ENCODE measurements at regions of chr11 and their contacts with region 1.

Region 1: GRCh38 chr11:63916837-63917691 is at the start of gene RCOR2:
- H3K4me3 ChIP-seq: peak within 1 kb of the TSS; percentile 47
- H3K27ac ChIP-seq: peak within 1 kb of the TSS; percentile 49; the same call in 1 of the 2 replicates
- H3K4me1 ChIP-seq: peaks cover 4% of the 10 kb centered on the region
- CTCF ChIP-seq: no peak

Region 2: GRCh38 chr11:63905179-63905578 is 11.9 kb before region 1 on chr11:
- CTCF ChIA-PET with region 1: no interaction called
- POLR2A ChIA-PET with region 1: no interaction called
- H3K4me3 ChIP-seq: no peak overlapping the region
- H3K27ac ChIP-seq: no peak overlapping the region
- H3K4me1 ChIP-seq: no peaks in the 10 kb centered on the region
- CTCF ChIP-seq: no peak

Region 3: DNA sequence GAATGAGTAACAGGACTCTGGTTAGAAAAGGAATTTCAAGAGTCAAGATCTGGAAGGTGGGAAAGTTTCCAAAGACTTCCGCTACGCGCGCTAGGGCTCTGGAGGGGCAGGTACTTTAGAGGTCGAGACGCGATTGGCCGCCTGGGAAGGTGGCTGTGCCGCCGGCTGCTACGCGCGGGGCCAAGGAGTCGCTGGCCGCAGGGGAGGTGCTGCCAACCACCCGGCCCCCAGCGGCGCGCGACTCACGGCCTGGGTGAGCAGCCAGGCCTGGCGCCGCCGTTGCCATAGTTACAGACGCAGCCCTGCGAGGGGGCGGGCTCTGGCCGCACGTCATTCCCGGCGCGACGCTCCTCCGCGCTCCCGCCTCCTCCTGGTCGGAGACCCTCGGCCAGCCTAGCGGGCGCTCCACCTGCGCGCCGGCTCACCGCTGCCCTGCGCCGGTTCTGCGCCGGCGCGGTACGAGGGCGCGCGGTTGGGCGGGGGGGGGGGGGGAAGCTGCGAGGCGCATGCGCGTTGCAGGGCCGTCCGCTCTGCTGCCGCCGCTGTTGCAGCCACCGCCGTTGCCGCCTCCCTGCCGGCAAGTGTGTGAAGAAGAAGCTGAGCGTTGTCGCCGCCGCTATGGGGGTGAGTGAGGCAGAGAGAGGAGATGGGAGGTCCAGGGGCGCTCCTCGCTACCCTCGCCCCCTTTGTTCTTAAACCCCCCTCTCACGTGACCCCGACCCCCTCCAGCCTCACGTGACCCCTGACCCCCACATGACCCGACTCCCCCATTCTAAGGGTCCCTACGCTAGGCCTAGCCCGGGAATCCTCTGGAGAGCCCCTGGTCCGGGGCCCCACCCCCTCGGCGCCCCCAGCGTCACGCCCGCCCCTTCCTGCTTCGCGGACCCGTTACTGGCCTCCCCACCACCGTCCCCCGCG is 21.7 kb after region 1 on chr11 and contains the start of gene NAA40:
- CTCF ChIA-PET with region 1: interaction called, 11 read pairs
- POLR2A ChIA-PET with region 1: interaction called, 9 read pairs
- H3K4me3 ChIP-seq: peak within 1 kb of the TSS; percentile 90
- H3K27ac ChIP-seq: peak within 1 kb of the TSS; percentile 57; the same call in 1 of the 2 replicates
- H3K4me1 ChIP-seq: no peaks in the 10 kb centered on the region
- CTCF ChIP-seq: peak; percentile 25; the same call in 1 of the 2 replicates

Region 4: DNA sequence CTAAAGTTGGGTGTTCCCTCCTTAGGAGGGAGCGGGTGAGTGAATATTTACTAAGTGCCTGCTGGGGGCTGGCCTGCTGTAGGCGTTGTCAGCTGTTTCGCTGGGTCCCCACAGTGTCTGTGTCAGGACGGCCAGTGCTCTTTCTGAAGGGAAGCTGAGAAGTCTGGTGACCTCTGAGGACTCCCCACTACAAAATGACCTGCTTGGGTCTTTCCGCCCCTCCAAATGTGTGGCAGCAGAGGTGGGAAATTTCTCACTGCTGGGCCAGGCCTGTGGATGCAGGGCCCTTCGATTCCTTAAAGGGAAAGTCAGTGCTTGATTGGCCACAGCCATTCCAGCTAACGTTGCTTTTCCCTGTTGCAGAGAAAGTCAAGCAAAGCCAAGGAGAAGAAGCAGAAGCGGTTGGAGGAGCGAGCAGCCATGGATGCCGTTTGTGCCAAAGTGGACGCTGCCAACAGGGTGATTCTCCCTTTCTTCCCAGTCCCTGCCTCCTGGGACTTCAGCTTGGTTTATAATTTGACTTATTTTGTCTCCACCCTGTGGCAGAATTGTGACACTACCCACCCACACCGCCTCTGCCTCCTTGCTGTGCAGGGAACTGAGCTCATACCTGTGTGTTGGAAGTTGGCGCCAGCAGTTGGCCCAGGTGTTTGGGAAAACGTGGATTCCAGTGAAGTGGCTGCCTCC is 28.6 kb after region 1 on chr11:
- CTCF ChIA-PET with region 1: interaction called, 17 read pairs
- POLR2A ChIA-PET with region 1: interaction called, 5 read pairs
- H3K4me3 ChIP-seq: no peak overlapping the region
- H3K27ac ChIP-seq: no peak overlapping the region
- H3K4me1 ChIP-seq: no peaks in the 10 kb centered on the region
- CTCF ChIP-seq: peak; percentile 64